Mucosa of descending colon (tissue), 3 donors: ENCODE measurements at regions of chr22 and their contacts with region 1.

Region 1: DNA sequence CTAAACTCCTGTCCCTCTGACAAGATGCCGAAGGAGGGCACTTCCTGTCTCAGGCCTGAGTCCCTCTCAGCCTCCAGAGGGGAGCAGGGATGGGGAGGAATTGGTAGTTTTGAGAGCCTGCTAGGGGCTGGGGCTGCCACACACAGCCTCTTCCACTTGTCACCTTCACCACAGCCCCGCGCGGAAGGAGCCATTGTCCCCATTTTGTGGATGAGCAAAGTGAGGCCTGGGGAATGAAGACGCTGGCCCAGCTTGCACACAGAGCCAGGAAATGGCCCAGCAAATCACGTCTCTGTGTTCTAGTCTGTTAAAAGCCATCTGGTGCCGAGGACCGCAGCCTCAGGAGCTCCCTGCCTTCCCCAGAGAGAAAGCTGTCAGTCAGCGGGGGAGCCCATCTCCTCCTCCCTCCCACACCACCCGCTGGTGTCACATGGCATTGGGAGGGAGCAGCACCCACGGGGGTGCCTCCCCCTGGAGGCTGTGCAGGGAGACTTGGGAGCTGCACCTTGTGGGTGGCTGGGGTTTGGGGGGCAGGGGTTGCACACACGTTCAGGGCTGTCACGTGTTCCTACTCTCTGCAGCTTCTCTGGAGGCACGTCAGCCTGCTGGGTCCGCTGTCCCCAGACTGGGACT is 34.6 kb downstream of the RASD2 start:
- DNase-seq: no peak
- ATAC-seq: no peak
- H3K4me3 ChIP-seq: no peak overlapping the region
- H3K4me1 ChIP-seq: peaks cover under 1% of the 10 kb centered on the region
- CTCF ChIP-seq: no peak

Region 2: DNA sequence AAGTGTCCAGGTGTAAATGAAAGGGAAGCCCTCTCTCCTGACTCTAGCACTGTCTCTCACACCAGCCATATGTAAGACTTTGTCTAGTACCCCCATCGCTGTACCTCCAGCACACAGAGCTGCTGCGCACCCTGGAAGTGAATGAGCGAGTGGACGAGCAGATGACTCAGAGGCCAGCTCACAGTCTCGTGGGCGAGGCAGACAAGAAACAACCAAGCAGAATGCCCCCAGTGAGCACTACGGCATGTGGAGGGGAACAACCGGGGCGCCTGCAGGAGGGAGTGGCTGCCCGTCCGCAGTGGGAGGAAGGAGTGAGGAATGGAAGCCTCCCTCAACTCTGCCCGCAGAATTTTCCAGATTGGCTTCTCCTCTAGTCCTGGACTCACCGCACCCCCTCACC is 128.9 kb before region 1 on chr22:
- intact Hi-C with region 1: loop called in 1 of 2 experiments (anchors 10 kb)
- DNase-seq: no peak
- ATAC-seq: peak; percentile 48
- H3K4me3 ChIP-seq: no peak overlapping the region
- H3K4me1 ChIP-seq: peaks cover 11% of the 10 kb centered on the region
- CTCF ChIP-seq: no peak

Region 3: GRCh38 chr22:35892192-35892591 is 317.0 kb after region 1 on chr22:
- intact Hi-C with region 1: no loop called
- DNase-seq: no peak
- ATAC-seq: no peak
- H3K4me3 ChIP-seq: no peak overlapping the region
- H3K4me1 ChIP-seq: peaks cover 6% of the 10 kb centered on the region
- CTCF ChIP-seq: no peak